ENCODE measurements at regions of chr3 and their contacts with region 1.

Region 1: GRCh38 chr3:59313365-59313764 is 263.5 kb upstream of the CFAP20DC start:
- DNase-seq: peak; percentile 79
- H3K4me3 Mint-ChIP-seq: no peak overlapping the region
- H3K27ac Mint-ChIP-seq: no peak overlapping the region
- H3K4me1 Mint-ChIP-seq: peaks cover 40% of the 10 kb centered on the region
- H3K27me3 Mint-ChIP-seq: no peaks in the 10 kb centered on the region

Region 2: DNA sequence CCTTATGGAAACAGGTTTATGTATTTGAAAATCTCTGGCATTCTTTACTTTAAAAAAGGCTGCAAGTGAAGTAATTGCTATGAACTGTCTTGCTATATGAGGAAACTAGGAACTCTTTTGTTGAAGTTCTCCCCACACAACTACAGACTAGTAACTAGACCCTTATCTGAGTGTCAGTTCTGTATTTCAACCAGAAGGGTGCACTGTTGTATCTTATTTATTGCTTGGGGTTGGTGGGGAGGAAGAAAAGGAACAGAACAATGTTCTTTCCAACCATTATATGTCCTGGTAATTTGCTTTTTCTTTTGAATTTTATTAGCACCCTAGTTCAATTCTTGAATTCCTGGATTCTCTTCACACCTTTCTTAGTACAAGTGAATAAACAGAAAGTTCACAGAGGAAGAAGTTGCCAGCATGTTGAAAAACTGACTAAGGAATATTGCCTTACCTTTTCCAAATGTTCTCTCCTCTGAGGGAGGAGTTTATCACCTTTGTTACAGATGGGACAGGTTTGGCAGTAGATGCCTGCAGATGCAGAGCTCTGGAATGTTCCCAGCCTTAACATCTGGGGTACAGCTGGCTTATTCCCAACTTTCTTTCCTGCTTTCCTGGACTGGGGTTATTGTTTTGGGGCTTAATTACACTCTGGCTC is 101.1 kb before region 1 on chr3:
- intact Hi-C with region 1: loop called (anchors 5 kb)
- DNase-seq: peak; percentile 73
- H3K4me3 Mint-ChIP-seq: no peak overlapping the region
- H3K27ac Mint-ChIP-seq: no peak overlapping the region
- H3K4me1 Mint-ChIP-seq: peaks cover 9% of the 10 kb centered on the region
- H3K27me3 Mint-ChIP-seq: peaks cover 11% of the 10 kb centered on the region

Region 3: DNA sequence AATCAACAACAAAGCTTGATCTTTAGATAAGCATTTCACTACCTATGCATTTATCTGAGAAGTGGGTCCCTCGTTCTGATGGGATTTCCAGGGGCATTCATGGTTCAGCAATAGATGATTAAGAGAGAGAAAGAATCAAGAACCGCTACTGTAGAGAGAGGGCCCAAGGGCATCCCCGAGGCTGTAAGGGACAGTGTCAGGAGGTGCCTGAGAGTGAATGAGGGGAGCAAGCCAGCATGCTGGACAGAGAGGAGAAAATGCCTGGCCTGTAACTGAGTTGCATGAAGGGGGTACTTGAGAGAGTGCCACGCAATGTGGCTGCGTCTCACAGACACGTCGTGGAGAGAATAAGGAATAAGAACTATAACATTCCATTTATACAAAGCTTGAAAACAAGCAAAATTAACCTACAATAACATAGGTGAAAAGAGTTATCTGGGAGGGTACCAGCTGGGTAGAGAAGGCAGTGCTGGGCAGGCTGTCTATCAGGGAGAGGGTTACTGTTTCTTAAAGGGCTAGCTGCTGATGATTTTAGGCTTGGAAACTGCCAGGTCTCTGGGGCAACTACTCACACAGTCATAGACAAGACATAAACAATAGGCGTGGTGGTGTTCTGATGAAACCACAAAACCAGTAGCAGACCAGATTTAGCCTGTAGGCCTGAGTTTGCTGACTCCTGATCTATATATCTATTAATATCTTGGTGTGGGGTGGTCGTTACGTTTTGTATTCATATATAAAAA is 111.1 kb after region 1 on chr3:
- intact Hi-C with region 1: loop called (anchors 5 kb)
- DNase-seq: peak; percentile 71
- H3K4me3 Mint-ChIP-seq: peak overlapping the region; percentile 1
- H3K27ac Mint-ChIP-seq: peak overlapping the region; percentile 73
- H3K4me1 Mint-ChIP-seq: peaks cover 52% of the 10 kb centered on the region
- H3K27me3 Mint-ChIP-seq: no peaks in the 10 kb centered on the region

Region 4: GRCh38 chr3:59456852-59457485 is 143.6 kb after region 1 on chr3:
- intact Hi-C with region 1: loop called (anchors 5 kb)
- DNase-seq: peak; percentile 77
- H3K4me3 Mint-ChIP-seq: no peak overlapping the region
- H3K27ac Mint-ChIP-seq: peak overlapping the region; percentile 59
- H3K4me1 Mint-ChIP-seq: peaks cover 34% of the 10 kb centered on the region
- H3K27me3 Mint-ChIP-seq: no peaks in the 10 kb centered on the region

Region 5: GRCh38 chr3:59575113-59576001 is 262.0 kb after region 1 on chr3:
- intact Hi-C with region 1: loop called (anchors 2 kb)
- DNase-seq: peak; percentile 95
- H3K4me3 Mint-ChIP-seq: no peak overlapping the region
- H3K27ac Mint-ChIP-seq: no peak overlapping the region
- H3K4me1 Mint-ChIP-seq: peaks cover 14% of the 10 kb centered on the region
- H3K27me3 Mint-ChIP-seq: no peaks in the 10 kb centered on the region

Region 6: GRCh38 chr3:59783468-59783988 is 470.2 kb after region 1 on chr3:
- intact Hi-C with region 1: loop called (anchors 10 kb)
- DNase-seq: peak; percentile 79
- H3K4me3 Mint-ChIP-seq: peak overlapping the region; percentile 39
- H3K27ac Mint-ChIP-seq: peak overlapping the region; percentile 76
- H3K4me1 Mint-ChIP-seq: peaks cover 31% of the 10 kb centered on the region
- H3K27me3 Mint-ChIP-seq: no peaks in the 10 kb centered on the region

Region 7: GRCh38 chr3:59857589-59858346 is 544.4 kb after region 1 on chr3:
- intact Hi-C with region 1: loop called (anchors 2 kb)
- DNase-seq: peak; percentile 91
- H3K4me3 Mint-ChIP-seq: no peak overlapping the region
- H3K27ac Mint-ChIP-seq: peak overlapping the region; percentile 59
- H3K4me1 Mint-ChIP-seq: peaks cover 13% of the 10 kb centered on the region
- H3K27me3 Mint-ChIP-seq: no peaks in the 10 kb centered on the region